Activated naive CD4-positive, alpha-beta T cell treated with anti-CD3 and anti-CD28 coated beads for 36 hours (primary cell): ENCODE measurements at regions of chr17 and their contacts with region 1.

Region 1: GRCh38 chr17:78723001-78723796 is 58.9 kb downstream of the CYTH1 start:
- DNase-seq: no peak
- H3K4me3 Mint-ChIP-seq: no peak overlapping the region
- H3K27ac Mint-ChIP-seq: peak overlapping the region; percentile 92
- H3K4me1 Mint-ChIP-seq: peaks cover 97% of the 10 kb centered on the region
- H3K27me3 Mint-ChIP-seq: no peaks in the 10 kb centered on the region

Region 2: DNA sequence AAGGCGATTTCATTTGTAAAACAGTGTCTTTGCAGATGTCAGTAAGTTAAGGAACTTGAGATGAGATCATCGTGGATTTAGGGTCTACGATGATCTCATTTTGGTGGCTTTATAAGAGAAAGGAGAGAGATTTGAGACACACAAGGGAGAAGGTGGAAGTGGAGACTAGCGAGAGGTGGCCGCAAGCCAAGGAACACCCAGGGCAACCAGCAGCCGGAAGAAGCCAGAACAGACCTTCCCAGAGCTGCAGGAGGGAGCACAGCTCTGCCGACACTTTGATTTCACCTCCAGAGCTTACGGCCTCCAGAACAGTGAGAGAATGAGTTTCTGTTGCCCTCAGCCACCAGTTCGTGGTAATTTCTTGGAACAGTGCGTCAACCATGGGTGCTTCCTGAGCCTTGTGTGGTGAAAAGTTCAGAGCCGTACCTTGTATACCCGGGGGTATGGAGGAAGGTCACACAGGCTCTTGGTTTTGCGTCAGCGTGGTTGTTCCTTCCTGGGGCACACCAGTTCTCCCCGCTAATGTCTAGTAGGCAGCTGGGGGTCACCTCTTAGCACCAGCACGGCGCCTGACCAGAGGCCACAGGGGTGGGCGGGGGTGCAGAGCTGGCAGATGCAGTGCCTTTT is 1595.4 kb before region 1 on chr17:
- CTCF ChIA-PET with region 1: no interaction called
- intact Hi-C with region 1: loop called (anchors 5 kb)
- DNase-seq: peak; percentile 83
- H3K4me3 Mint-ChIP-seq: peak overlapping the region; percentile 67
- H3K27ac Mint-ChIP-seq: peak overlapping the region; percentile 90
- H3K4me1 Mint-ChIP-seq: peaks cover 26% of the 10 kb centered on the region
- H3K27me3 Mint-ChIP-seq: no peaks in the 10 kb centered on the region

Region 3: DNA sequence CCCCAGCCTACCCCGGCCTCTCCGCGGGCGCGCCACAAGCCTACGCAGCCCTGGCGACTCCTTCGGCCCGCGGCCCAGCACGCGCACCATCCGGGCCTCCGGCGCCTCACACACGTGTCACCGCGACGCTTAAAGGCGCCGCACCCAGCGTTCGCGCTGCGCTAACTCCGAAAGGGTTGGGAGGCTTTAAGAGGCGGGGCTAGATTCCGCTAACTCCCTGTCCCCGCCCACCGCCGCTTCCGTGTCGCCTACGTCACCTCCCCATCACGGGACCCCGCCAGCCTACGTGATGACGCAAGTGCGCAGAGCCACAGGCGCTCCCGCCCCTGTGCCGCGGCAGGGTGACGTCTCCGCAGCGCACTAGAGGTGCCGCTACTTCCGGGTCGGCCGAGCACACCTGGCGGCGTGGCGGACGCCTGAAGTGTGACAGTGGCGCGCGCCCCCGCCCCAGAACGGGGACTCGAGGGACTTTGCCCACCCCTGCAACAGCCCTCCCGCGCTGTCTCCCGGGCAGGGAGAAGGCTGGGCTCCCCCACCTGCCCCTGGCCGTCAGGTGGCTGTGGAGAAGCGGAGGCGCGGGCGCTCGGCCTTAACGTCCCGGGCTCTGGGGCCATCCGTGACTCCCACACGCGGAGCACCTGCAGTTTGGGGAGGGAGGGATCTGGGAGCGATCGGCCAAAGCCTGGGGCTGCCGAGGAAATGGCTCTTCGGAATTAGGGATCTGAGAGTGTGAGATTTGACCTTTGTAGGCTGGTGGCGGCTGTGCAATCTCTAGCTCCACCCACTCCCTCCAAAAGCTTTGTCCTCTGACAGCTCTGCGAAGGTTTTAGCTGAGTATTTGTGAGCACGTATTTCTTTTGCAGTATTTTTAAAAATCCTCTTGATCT is 117.8 kb after region 1 on chr17 and contains the start of gene USP36:
- CTCF ChIA-PET with region 1: no interaction called
- intact Hi-C with region 1: loop called (anchors 5 kb)
- DNase-seq: peak; percentile 100
- H3K4me3 Mint-ChIP-seq: peak within 1 kb of the TSS; percentile 96
- H3K27ac Mint-ChIP-seq: peak within 1 kb of the TSS; percentile 93
- H3K4me1 Mint-ChIP-seq: peaks cover 44% of the 10 kb centered on the region
- H3K27me3 Mint-ChIP-seq: no peaks in the 10 kb centered on the region
- total RNA-seq, gene USP36: 65.3 to 68.7 TPM

Region 4: DNA sequence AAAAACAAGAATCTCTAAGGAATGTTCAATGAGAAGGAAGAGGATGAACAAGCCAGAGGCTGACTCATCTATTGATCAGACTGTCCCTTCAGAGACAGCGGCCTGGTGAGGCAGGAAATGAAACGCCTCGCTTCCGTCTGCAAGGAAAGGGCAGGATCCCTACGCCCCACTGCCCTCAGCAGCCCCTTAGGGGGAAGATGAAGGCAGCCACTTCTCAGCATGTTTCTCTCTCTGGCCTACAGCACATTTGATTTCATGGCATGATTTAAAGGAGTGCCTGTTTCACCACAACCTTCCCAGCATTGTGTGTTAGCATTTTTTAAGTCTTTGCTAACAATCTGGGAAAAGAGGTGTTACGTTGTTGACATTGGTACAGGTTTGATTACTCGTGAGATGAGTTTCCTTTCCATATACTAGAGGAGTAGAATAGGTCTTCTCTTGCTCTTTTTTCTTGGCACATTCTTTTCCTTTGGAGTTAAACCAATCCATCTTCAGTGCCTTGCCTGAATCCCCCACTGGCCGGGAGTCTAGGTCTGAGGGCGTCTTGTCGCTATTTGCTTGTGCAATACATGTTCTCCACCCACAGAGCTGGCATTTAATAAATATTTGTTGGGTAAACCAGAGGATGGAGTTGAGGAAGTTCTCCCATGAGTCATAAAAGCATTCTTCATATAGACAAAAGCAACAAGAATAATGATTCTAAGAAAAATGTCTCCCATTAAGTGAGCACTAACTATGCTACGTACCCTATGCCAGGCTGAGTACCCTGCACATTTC is 840.2 kb after region 1 on chr17:
- CTCF ChIA-PET with region 1: no interaction called
- intact Hi-C with region 1: no loop called
- DNase-seq: no peak
- H3K4me3 Mint-ChIP-seq: no peak overlapping the region
- H3K27ac Mint-ChIP-seq: no peak overlapping the region
- H3K4me1 Mint-ChIP-seq: no peaks in the 10 kb centered on the region
- H3K27me3 Mint-ChIP-seq: peaks cover 14% of the 10 kb centered on the region